Heart right ventricle (tissue), 16 donors: ENCODE measurements at regions of chr19 and their contacts with region 1.

Region 1: GRCh38 chr19:45692187-45693105 is at the start of gene QPCTL:
- DNase-seq: peak; percentile 95 to 97
- ATAC-seq: peak; percentile 92 to 97 (median 95)
- H3K4me3 ChIP-seq: peak within 1 kb of the TSS; percentile 65 to 96 (median 72)
- H3K27ac ChIP-seq: peak within 1 kb of the TSS; percentile 28 to 94 (median 87)
- H3K4me1 ChIP-seq: peaks cover 2 to 18% (median 15%) of the 10 kb centered on the region in 9 donors
- H3K27me3 ChIP-seq: no peaks in the 10 kb centered on the region
- CTCF ChIP-seq: no peak
- total RNA-seq, gene QPCTL: 1.8 to 3.5 (median 2.4) TPM

Region 2: DNA sequence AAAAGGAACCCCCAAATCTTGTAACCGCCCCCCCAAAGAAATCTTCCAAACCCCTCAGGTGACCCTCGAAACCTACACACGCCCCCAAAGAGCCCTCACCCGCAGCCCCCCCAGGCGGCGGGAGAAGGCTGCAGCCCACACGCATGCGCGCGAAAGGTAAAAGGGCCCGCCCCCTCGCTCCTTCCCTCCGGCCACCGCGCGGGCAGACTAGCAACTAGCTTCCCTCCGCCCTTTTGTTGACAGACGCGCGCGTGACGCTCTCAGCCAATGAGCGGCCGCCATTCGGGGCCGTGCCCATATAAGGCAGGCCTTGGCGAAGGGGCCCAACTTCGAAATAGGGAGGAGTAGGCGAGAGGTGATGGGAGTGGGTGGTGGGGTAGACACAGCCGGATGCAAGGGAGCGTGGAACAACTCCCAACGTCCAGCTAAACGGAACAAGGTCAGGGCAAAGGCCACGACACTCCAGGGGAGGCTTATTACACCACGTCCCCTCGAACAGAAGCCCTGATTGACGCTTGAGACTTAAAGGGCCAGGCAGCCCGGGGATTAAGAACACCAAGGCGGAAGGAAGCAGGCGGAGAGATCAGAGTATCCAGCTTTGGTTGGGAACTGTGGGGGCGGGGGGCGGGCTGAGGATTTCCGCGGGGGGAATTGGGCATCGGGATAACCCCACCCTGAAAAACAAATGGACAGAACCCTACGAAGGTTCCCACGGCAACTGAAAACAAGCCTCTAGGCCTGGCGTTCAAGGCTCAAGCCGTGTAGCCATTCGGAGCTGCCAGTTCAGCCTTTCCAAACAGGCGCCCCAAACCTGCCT is 24.9 kb after region 1 on chr19:
- intact Hi-C with region 1: loop called in 3 of 10 experiments (anchors 1 kb)
- DNase-seq: peak; percentile 99
- ATAC-seq: peak; percentile 97 to 99 (median 98)
- H3K4me3 ChIP-seq: peak overlapping the region; percentile 48 to 87 (median 64)
- H3K27ac ChIP-seq: peak overlapping the region; percentile 74 to 97 (median 94)
- H3K4me1 ChIP-seq: peaks cover 3 to 35% (median 20%) of the 10 kb centered on the region in 9 donors
- H3K27me3 ChIP-seq: no peaks in the 10 kb centered on the region
- CTCF ChIP-seq: peak in 5 of 9 donors; percentile 7 to 41 (median 14)

Region 3: GRCh38 chr19:45730389-45731288 is 38.2 kb after region 1 on chr19 and contains the start of gene FBXO46:
- intact Hi-C with region 1: loop called in 1 of 10 experiments (anchors 2 kb)
- DNase-seq: peak; percentile 95 to 99
- ATAC-seq: peak; percentile 97 to 99 (median 99)
- H3K4me3 ChIP-seq: peak within 1 kb of the TSS; percentile 43 to 84 (median 78)
- H3K27ac ChIP-seq: peak within 1 kb of the TSS in 8 of 10 donors; percentile 41 to 85 (median 73)
- H3K4me1 ChIP-seq: peaks cover 2 to 28% (median 16%) of the 10 kb centered on the region in 9 donors
- H3K27me3 ChIP-seq: no peaks in the 10 kb centered on the region
- CTCF ChIP-seq: peak in 2 of 9 donors; percentile 10 to 14
- total RNA-seq, gene FBXO46: 5.2 to 13.5 (median 9.1) TPM